Activated naive CD4-positive, alpha-beta T cell treated with anti-CD3 and anti-CD28 coated beads for 36 hours (primary cell): ENCODE measurements at regions of chr17 and their contacts with region 1.

Region 1: DNA sequence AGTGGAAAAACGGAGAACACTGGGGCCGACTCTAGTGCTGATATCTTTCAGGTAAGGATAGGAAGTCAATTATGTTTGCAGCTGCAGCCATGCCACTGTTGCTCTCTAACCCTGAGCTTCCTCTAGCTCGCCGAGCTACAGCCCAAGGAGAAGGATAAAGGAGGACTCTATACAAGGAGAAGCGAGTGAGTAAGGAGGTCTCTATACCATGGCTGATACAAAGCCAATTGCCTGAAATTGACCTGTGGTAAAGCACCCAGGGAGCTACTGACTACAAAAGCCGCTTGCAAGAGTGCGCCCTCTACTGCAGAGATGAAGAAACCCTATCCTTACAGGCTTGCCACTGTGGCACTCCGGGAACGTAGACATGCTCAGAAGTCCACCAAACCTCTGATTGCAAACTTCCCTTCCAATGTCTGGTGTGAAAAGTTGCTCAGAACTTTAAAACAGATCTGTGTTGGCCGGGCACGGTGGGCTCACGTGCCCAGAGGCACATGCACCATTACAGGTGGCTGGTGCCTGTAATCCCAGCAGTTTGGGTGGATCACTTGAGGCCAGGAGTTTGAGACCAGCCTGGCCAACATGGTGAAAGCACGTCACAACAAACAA is 10.8 kb upstream of the SLC46A1 start:
- DNase-seq: peak; percentile 76
- H3K4me3 Mint-ChIP-seq: no peak overlapping the region
- H3K27ac Mint-ChIP-seq: no peak overlapping the region
- H3K4me1 Mint-ChIP-seq: peaks cover 3% of the 10 kb centered on the region
- H3K27me3 Mint-ChIP-seq: no peaks in the 10 kb centered on the region

Region 2: DNA sequence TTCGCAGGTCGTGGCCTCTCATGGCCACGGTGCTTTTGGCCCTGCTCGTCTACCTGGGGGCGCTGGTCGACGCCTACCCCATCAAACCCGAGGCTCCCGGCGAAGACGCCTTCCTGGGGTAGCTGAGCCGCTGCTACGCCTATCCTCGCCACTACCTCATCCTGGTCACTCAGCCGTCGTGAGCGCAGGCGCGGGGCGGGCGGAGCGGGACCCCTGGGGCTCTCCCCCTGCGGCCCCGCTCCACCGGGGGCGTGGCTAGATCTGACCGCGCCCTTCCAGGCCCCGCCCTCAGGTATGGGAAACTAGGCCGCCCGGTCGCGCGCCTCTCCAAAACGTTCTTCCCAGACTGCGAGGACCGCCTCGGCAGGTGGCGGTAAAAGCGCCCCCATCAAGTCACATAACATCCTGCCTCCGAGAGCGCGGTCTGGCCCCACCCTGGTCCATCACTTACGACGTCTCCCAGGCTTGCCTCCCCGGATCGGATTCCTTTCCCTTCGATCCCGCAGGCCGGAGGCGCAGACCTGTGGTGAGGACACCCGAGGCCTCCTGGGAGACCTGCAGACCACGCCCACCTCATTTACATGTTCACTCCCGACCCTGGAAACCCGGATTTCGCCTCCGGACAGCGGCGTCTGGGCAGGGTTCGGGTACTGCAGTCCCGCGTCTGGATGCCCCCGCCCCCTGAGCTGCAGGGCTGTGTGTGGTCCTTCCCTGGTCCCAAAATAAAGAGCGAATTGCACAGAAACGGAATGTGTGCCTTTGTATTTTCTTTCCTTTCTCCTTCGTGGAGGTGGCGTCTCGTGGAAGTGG is 189.3 kb before region 1 on chr17:
- CTCF ChIA-PET with region 1: interaction called, 7 read pairs
- intact Hi-C with region 1: loop called (anchors 2 kb)
- DNase-seq: peak; percentile 38
- H3K4me3 Mint-ChIP-seq: peak overlapping the region; percentile 69
- H3K27ac Mint-ChIP-seq: no peak overlapping the region
- H3K4me1 Mint-ChIP-seq: peaks cover 5% of the 10 kb centered on the region
- H3K27me3 Mint-ChIP-seq: peaks cover 37% of the 10 kb centered on the region

Region 3: DNA sequence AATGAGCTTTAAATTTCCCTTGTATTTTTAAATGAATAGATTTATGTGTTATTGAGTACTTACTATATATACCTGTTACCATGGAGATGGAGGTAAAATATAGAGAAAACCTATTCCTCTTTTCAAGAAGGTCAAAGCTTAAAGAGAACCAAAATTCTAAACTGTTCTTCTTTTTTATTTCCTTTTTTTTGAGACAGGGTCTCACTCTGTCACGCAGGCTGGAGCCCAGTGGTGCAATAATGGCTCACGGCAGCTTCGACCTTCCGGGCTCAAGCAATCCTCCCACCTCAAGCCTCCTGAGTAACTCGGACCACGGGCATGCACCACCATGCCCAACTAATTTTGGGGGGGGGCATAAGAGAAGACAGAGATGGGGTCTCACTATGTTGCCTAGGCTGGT is 122.8 kb before region 1 on chr17:
- CTCF ChIA-PET with region 1: no interaction called
- intact Hi-C with region 1: no loop called
- DNase-seq: no peak
- H3K4me3 Mint-ChIP-seq: no peak overlapping the region
- H3K27ac Mint-ChIP-seq: no peak overlapping the region
- H3K4me1 Mint-ChIP-seq: peaks cover 16% of the 10 kb centered on the region
- H3K27me3 Mint-ChIP-seq: peaks cover 4% of the 10 kb centered on the region

Region 4: DNA sequence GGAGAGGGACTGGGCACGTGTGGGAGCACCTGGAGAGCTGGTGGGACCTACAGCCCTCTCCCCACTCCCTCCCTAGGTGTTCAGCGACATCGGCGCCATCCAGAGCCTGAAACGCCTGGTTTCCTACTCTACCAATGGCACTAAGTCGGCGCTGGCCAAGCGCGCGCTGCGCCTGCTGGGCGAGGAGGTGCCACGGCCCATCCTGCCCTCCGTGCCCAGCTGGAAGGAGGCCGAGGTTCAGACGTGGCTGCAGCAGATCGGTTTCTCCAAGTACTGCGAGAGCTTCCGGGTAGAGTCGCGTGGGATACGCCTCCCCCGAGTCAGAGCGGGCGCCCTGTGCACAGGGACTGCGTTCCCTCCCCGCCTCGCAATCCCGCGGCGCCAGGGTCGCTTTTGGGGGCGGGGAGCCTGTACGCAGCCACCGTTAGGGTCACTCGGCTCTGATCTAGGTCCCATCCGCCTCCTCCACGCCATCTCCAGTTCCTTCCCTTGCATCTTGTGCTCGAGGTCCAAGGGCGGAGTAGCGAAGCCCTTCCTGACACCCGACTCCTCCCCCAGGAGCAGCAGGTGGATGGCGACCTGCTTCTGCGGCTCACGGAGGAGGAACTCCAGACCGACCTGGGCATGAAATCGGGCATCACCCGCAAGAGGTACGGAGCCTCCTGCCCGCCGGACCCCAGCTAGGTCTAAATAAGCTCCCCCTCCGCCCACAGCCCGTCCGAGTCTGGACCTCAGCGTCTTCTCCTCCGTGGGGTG is 32.3 kb before region 1 on chr17:
- CTCF ChIA-PET with region 1: interaction called, 10 read pairs
- intact Hi-C with region 1: loop called (anchors 2 kb)
- DNase-seq: peak; percentile 81
- H3K4me3 Mint-ChIP-seq: peak overlapping the region; percentile 87
- H3K27ac Mint-ChIP-seq: peak overlapping the region; percentile 9
- H3K4me1 Mint-ChIP-seq: peaks cover 23% of the 10 kb centered on the region
- H3K27me3 Mint-ChIP-seq: peaks cover 12% of the 10 kb centered on the region

Region 5: DNA sequence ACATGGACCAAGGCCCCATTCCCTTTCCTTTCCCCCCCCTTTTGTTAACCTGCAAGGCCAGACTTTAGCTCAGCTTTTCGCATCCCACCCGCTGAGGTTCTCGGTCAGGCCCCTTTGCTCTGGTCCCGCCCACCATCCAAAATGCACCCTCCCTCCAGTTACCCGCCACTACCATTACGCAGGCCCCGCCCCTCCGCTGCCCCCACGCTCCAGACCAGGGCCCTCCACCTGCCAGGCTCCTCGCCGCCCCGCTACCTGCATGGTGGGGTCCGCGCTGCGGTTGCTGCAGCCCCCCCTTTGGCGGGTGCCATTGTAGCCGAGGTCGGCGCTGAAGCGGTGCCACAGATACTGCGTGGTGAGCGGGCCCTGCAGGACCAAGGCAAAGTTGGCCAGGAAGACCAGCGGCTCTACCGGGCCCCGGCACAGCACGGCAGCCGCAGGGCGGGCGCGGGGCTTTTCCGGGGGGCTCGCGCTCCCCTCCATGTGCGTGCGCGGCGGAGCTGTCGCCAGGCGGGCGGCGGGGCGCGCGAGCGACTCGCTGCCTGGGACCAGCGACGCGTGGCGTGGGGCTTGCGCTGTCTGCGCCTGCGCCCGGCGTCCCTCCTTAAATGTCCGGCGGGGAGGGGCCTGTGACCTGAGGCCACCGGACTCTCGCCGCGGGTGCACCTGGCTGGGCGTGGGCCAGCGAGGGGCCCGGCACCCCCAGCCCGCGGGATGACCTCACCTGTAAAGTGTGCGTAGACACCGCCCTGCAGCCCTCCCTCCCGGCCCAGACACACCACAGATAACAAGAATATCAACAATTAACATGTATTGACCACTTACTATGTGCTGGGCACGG is 11.0 kb before region 1 on chr17 and contains the start of gene SLC46A1:
- CTCF ChIA-PET with region 1: interaction called, 40 read pairs
- intact Hi-C with region 1: no loop called
- DNase-seq: peak; percentile 51
- H3K4me3 Mint-ChIP-seq: peak within 1 kb of the TSS; percentile 74
- H3K27ac Mint-ChIP-seq: no peak within 1 kb of the TSS
- H3K4me1 Mint-ChIP-seq: peaks cover 6% of the 10 kb centered on the region
- H3K27me3 Mint-ChIP-seq: peaks cover 2% of the 10 kb centered on the region
- total RNA-seq, gene SLC46A1: 1.8 to 2.4 TPM